PC-9 (cell line): ENCODE measurements at regions of chr12 and their contacts with region 1.

Region 1: DNA sequence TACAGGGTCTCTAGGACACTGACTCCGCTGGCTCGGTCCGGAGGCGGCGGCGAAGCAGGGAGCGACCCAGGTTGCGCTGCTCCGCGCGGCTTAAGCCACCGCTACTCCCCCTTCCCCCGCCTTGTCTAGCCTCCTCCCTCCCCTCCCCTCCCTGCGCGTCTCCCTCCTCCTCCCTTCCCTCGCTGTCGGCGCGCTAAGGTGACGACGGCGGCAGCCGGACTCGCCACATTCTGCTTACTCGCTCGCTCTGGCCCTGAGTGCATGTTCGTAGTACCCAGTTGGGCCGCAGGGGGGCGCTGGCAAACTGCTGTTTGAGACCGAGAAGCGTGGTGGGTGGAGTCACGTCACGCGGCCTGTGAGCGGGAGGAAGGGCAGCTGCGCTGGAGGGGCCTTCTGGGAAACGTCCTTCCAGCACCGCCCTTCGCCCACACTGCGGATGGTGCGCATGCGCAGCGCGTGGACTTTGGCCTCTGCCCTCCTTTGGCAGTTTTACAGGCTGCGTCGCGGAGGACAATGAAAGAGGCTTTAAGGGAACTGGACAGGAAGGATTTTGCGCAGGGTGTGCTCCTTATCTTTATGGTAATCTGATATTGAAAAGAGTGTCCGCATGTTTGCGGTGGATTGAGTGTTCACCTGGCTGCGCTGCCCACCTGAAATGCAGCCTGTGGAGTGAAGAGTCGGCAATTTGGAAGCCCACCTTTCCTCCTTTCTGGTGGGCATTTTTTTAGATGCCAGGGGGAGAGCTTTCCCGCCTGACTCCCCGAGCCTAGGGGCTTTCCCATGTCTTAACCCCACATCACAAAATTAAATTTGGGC is at the start of gene SCAF11:
- DNase-seq: peak; percentile 98 to 100
- H3K4me3 ChIP-seq: peak within 1 kb of the TSS; percentile 94
- H3K27ac ChIP-seq: peak within 1 kb of the TSS; percentile 94
- H3K4me1 ChIP-seq: peaks cover 36% of the 10 kb centered on the region
- H3K27me3 ChIP-seq: no peaks in the 10 kb centered on the region
- CTCF ChIP-seq: peak; percentile 92
- total RNA-seq, gene SCAF11: 95.5 and 98.7 TPM in 2 replicates

Region 2: GRCh38 chr12:45728630-45729232 is 261.9 kb before region 1 on chr12:
- CTCF ChIA-PET with region 1: no interaction called
- POLR2A ChIA-PET with region 1: no interaction called
- intact Hi-C with region 1: loop called (anchors 5 kb)
- DNase-seq: peak; percentile 81 to 96
- H3K4me3 ChIP-seq: peak overlapping the region; percentile 98
- H3K27ac ChIP-seq: peak overlapping the region; percentile 91
- H3K4me1 ChIP-seq: peaks cover 42% of the 10 kb centered on the region
- H3K27me3 ChIP-seq: no peaks in the 10 kb centered on the region
- CTCF ChIP-seq: peak; percentile 83

Region 3: DNA sequence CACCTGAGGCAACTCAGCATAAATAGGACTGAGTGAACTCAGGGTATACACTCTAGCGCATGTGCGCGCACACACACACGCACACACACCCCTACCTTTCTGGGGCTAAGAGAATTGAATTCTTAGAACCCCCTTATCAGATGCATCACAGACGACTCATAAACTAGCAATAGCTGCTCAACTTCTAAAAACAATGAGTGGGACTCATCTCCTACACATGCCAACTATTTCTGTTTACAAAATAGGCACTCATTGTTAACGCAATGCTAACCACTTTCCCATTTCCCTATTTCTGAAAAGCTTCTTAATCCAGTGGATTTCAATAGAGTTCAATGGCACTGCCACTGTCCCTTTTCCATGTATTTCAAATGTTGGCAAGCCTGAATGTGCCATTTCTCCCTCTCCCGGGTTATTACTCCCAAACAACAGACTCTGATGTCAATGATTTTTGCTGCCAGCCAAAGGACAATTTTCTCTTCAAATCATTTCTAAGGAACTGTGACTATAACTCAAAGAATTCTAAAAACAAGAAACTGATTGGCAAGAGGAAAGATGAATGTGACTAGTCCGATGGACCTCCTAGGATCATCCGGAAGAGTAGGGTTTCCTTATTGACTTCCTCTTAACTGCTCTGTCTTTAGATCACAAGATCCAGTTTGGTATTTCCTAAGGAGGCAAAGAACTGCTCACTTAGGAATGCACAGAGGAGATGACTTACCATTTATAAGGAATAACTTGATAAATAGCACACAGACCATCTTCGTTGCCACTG is 229.4 kb after region 1 on chr12:
- CTCF ChIA-PET with region 1: no interaction called
- POLR2A ChIA-PET with region 1: no interaction called
- intact Hi-C with region 1: loop called (anchors 5 kb)
- DNase-seq: peak; percentile 73 to 97
- H3K4me3 ChIP-seq: peak overlapping the region; percentile 7; the same call in 1 of the 2 replicates
- H3K27ac ChIP-seq: peak overlapping the region; percentile 85
- H3K4me1 ChIP-seq: peaks cover 53% of the 10 kb centered on the region
- H3K27me3 ChIP-seq: no peaks in the 10 kb centered on the region
- CTCF ChIP-seq: no peak

Region 4: GRCh38 chr12:46268590-46269558 is 278.2 kb after region 1 on chr12 and contains the start of gene SLC38A1:
- CTCF ChIA-PET with region 1: no interaction called
- POLR2A ChIA-PET with region 1: interaction called, 3 read pairs
- intact Hi-C with region 1: loop called (anchors 2 kb)
- DNase-seq: peak; percentile 89 to 90
- H3K4me3 ChIP-seq: peak within 1 kb of the TSS; percentile 89
- H3K27ac ChIP-seq: peak within 1 kb of the TSS; percentile 98
- H3K4me1 ChIP-seq: peaks cover 34% of the 10 kb centered on the region
- H3K27me3 ChIP-seq: no peaks in the 10 kb centered on the region
- CTCF ChIP-seq: no peak
- total RNA-seq, gene SLC38A1: 77.7 and 131 TPM in 2 replicates

Region 5: DNA sequence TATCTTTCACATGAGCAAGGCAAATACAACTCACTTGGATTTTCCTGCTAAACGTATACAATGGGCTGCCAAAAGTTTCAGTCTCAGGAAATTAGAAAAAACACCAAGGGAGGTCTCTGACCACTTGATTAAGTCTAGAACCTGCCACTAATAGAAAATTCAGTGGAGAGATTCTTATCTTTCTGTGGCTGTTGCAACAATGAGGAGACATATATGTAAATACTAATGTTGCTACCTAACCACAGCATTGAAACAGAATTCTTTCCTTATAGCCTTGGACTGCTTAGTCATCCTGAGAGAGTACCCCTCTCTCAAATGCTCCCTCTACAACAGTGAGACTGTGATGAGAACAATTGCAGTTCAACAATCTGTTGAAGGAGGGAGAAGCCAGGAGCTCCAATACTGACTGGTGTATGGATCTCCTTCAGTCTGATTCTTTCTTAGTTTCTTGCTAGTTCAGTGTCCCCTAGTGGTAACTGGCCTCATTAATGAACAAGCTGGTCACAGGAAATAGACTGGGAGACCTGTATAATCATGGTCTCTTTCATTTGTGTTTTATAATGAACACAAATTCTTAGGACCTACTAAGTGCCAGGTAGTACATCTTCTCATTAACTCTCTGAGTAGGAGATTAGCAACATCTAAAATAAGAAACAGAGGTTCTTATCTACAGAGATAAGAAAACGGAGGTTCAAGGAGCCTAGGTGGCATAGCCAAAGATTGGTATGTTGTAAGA is 670.6 kb after region 1 on chr12:
- CTCF ChIA-PET with region 1: no interaction called
- POLR2A ChIA-PET with region 1: no interaction called
- intact Hi-C with region 1: loop called (anchors 5 kb)
- DNase-seq: peak; percentile 39 to 72
- H3K4me3 ChIP-seq: no peak overlapping the region
- H3K27ac ChIP-seq: peak overlapping the region; percentile 75
- H3K4me1 ChIP-seq: peaks cover 53% of the 10 kb centered on the region
- H3K27me3 ChIP-seq: no peaks in the 10 kb centered on the region
- CTCF ChIP-seq: peak; percentile 65

Region 6: DNA sequence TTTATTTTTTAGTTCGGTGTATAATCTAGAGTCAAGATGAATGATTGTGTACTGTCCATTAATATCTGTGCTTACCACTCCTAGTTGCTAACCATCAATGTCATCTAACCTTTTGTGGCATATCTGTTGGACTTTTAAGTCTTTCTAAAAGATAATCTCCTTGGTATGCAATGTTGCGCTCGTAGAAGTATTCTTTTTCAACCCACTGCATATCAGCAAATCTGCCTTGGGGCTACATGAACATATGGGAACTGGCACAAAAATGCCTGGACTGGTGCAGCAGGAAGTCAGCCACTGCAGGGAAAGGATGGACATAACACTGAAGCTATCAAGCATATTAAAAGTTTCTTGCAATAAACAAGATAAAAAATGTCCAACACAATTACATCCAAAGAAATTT is 959.4 kb after region 1 on chr12:
- CTCF ChIA-PET with region 1: no interaction called
- POLR2A ChIA-PET with region 1: no interaction called
- intact Hi-C with region 1: loop called (anchors 5 kb)
- DNase-seq: peak; percentile 72 to 87
- H3K4me3 ChIP-seq: no peak overlapping the region
- H3K27ac ChIP-seq: no peak overlapping the region
- H3K4me1 ChIP-seq: peaks cover 14% of the 10 kb centered on the region
- H3K27me3 ChIP-seq: no peaks in the 10 kb centered on the region
- CTCF ChIP-seq: no peak